ENCODE measurements at regions of chr17 and their contacts with region 1.

Region 1: GRCh38 chr17:49575579-49576087 is at the start of gene NXPH3:
- DNase-seq: peak; percentile 65
- H3K4me3 Mint-ChIP-seq: peak within 1 kb of the TSS; percentile 63
- H3K27ac Mint-ChIP-seq: no peak within 1 kb of the TSS
- H3K4me1 Mint-ChIP-seq: peaks cover 17% of the 10 kb centered on the region
- H3K27me3 Mint-ChIP-seq: peaks cover 58% of the 10 kb centered on the region
- total RNA-seq, gene NXPH3: 0.21 and 0.25 TPM in 2 replicates

Region 2: DNA sequence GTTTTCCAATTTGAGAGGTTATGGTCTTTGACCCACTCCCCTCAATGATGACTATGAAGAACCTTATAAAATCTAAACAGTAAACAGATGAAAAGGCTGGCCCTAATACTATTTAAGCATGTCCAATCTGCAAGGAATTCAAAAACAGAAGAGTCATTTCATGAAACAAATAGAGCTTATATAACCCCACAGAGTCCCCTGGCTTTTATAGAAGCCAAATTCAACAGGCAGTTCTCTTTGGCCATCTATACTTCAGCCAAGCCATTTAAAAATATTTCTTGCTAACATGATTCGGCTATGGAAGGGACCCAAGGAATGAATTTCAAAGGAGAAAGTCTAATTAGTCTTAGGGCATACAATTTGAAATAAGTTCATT is 58.8 kb after region 1 on chr17:
- intact Hi-C with region 1: no loop called
- DNase-seq: no peak
- H3K4me3 Mint-ChIP-seq: no peak overlapping the region
- H3K27ac Mint-ChIP-seq: no peak overlapping the region
- H3K4me1 Mint-ChIP-seq: peaks cover 17% of the 10 kb centered on the region
- H3K27me3 Mint-ChIP-seq: no peaks in the 10 kb centered on the region

Region 3: GRCh38 chr17:49646391-49647255 is 71.0 kb after region 1 on chr17:
- intact Hi-C with region 1: loop called (anchors 10 kb)
- DNase-seq: peak; percentile 26
- H3K4me3 Mint-ChIP-seq: no peak overlapping the region
- H3K27ac Mint-ChIP-seq: peak overlapping the region; percentile 62
- H3K4me1 Mint-ChIP-seq: peaks cover 37% of the 10 kb centered on the region
- H3K27me3 Mint-ChIP-seq: no peaks in the 10 kb centered on the region